Activated CD4-positive, alpha-beta memory T cell treated with anti-CD3 and anti-CD28 coated beads for 36 hours (primary cell): ENCODE measurements at regions of chr16 and their contacts with region 1.

Region 1: GRCh38 chr16:79601931-79602627 is 1.5 kb upstream of the MAF start:
- DNase-seq: peak; percentile 92
- H3K4me3 Mint-ChIP-seq: peak overlapping the region; percentile 96
- H3K27ac Mint-ChIP-seq: peak overlapping the region; percentile 98
- H3K4me1 Mint-ChIP-seq: peaks cover 38% of the 10 kb centered on the region
- H3K27me3 Mint-ChIP-seq: peaks cover 3% of the 10 kb centered on the region

Region 2: GRCh38 chr16:78122774-78123315 is 1479.2 kb before region 1 on chr16:
- CTCF ChIA-PET with region 1: no interaction called
- POLR2A ChIA-PET with region 1: interaction called, 5 read pairs
- intact Hi-C with region 1: loop called (anchors 10 kb)
- DNase-seq: peak; percentile 28
- H3K4me3 Mint-ChIP-seq: peak overlapping the region; percentile 31
- H3K27ac Mint-ChIP-seq: no peak overlapping the region
- H3K4me1 Mint-ChIP-seq: peaks cover 7% of the 10 kb centered on the region
- H3K27me3 Mint-ChIP-seq: no peaks in the 10 kb centered on the region

Region 3: DNA sequence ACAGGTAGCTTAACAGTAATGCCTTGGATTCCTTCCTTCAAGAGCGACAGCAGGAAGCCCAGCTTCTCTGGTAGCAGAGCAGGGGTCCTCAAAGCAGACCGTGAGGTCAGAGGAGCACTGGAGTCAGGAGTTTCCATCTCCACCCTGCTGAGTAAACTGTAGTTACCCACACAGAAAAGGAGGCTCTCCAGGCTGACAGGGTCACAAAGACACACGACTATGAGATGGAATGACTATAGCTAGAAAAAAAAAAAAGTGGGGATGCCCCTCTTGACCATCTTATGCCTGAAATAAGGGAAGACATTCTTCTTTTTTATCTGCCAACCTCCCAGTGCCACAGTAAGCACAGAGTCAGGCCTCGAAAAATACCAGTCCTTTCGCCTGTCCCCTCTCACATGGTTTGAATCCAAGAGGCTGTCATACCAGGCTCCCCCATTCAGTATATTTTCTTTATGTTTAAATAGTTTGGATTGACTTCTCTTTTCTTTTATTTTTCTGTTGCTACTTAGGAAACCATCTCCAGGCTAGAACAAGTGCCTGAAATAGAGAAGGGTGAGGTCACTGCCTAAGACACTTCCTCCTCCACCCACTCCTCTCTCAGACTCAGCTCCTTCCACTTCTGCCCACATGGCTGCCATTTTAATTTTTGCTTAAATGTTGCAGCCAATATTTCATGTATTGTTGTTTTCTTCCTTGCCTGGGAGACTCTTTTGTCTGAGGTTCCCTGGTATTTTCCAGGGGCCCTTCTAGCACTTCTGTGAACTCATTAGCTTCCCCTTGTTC is 708.9 kb before region 1 on chr16:
- CTCF ChIA-PET with region 1: interaction called, 3 read pairs
- POLR2A ChIA-PET with region 1: interaction called, 15 read pairs
- intact Hi-C with region 1: loop called (anchors 1 kb)
- DNase-seq: peak; percentile 65
- H3K4me3 Mint-ChIP-seq: peak overlapping the region; percentile 20
- H3K27ac Mint-ChIP-seq: peak overlapping the region; percentile 96
- H3K4me1 Mint-ChIP-seq: peaks cover 86% of the 10 kb centered on the region
- H3K27me3 Mint-ChIP-seq: no peaks in the 10 kb centered on the region

Region 4: GRCh38 chr16:79269211-79269863 is 332.7 kb before region 1 on chr16:
- CTCF ChIA-PET with region 1: interaction called, 18 read pairs
- POLR2A ChIA-PET with region 1: interaction called, 35 read pairs
- intact Hi-C with region 1: loop called (anchors 1 kb)
- DNase-seq: peak; percentile 89
- H3K4me3 Mint-ChIP-seq: peak overlapping the region; percentile 60
- H3K27ac Mint-ChIP-seq: peak overlapping the region; percentile 98
- H3K4me1 Mint-ChIP-seq: peaks cover 91% of the 10 kb centered on the region
- H3K27me3 Mint-ChIP-seq: peaks cover 5% of the 10 kb centered on the region

Region 5: GRCh38 chr16:79589601-79590102 is 12.4 kb before region 1 on chr16:
- CTCF ChIA-PET with region 1: interaction called, 11 read pairs
- POLR2A ChIA-PET with region 1: interaction called, 5 read pairs
- intact Hi-C with region 1: no loop called
- DNase-seq: peak; percentile 27
- H3K4me3 Mint-ChIP-seq: peak overlapping the region; percentile 61
- H3K27ac Mint-ChIP-seq: peak overlapping the region; percentile 35
- H3K4me1 Mint-ChIP-seq: peaks cover 32% of the 10 kb centered on the region
- H3K27me3 Mint-ChIP-seq: peaks cover 5% of the 10 kb centered on the region

Region 6: GRCh38 chr16:79677799-79678577 is 75.9 kb after region 1 on chr16:
- CTCF ChIA-PET with region 1: no interaction called
- POLR2A ChIA-PET with region 1: no interaction called
- intact Hi-C with region 1: no loop called
- DNase-seq: no peak
- H3K4me3 Mint-ChIP-seq: no peak overlapping the region
- H3K27ac Mint-ChIP-seq: no peak overlapping the region
- H3K4me1 Mint-ChIP-seq: no peaks in the 10 kb centered on the region
- H3K27me3 Mint-ChIP-seq: no peaks in the 10 kb centered on the region

Region 7: DNA sequence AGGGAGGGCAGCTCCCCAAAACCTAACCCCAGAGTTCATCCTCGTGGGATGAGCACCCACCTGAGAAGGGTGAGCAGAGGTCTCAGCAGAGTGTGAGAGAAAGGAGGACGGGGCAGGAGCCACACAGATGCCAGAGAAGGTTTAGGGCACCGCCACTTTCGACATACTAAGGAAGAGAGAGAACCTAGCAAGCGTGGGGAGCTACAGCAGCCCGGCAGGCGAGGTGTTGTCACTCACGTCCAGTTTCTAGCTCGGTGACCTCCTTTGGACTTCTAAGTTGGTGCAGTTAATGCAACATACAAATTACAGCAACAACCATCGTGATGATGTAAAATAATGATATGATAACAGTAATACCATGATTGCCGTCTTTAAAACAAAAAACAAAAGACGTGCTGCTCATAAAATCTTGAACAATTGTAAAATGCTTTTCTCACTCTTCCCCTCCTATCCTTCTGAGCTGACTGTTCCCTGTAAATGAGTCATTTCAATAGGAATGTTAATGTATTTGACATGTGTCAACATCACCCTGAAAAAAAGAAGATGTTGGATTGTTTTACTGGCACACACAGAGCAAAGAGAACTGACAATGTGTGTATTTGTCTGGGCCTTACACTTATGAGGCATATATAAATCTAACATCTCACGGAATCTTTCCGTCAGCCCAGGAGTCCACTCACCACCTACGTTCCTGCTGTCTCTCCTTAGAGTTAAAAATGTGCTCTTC is 156.7 kb after region 1 on chr16:
- CTCF ChIA-PET with region 1: no interaction called
- POLR2A ChIA-PET with region 1: interaction called, 3 read pairs
- intact Hi-C with region 1: loop called (anchors 5 kb)
- DNase-seq: no peak
- H3K4me3 Mint-ChIP-seq: no peak overlapping the region
- H3K27ac Mint-ChIP-seq: no peak overlapping the region
- H3K4me1 Mint-ChIP-seq: peaks cover 37% of the 10 kb centered on the region
- H3K27me3 Mint-ChIP-seq: peaks cover 4% of the 10 kb centered on the region

Region 8: DNA sequence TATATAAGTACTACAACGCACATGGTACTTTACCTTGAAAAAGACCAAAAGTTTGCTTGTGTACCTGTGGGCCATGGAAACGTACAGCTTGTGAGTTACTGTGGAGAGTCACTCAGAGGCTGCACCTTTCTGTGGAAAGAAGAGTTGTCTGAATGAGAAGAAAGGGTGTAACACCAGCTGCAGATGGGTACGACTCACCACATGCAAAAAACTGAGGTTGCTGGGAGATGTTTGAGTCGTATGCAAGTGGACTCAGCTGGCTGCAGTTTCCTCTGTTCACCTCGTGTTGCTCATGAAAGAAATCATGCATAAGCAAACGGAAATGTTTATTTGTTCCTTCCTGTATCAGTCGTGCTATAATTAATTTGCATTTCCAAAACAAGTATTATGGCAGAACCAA is 916.4 kb after region 1 on chr16:
- CTCF ChIA-PET with region 1: no interaction called
- POLR2A ChIA-PET with region 1: no interaction called
- intact Hi-C with region 1: loop called (anchors 5 kb)
- DNase-seq: peak; percentile 65
- H3K4me3 Mint-ChIP-seq: no peak overlapping the region
- H3K27ac Mint-ChIP-seq: no peak overlapping the region
- H3K4me1 Mint-ChIP-seq: peaks cover 21% of the 10 kb centered on the region
- H3K27me3 Mint-ChIP-seq: peaks cover 5% of the 10 kb centered on the region